ENCODE measurements at regions of chr10 and their contacts with region 1.

Region 1: GRCh38 chr10:24952707-24953645 is 570 bp upstream of the PRTFDC1 start:
- DNase-seq: peak; percentile 43 to 66 (median 49)
- H3K4me3 ChIP-seq: peak overlapping the region in 1 of 2 donors; percentile 59
- H3K4me3 Mint-ChIP-seq: peak overlapping the region; percentile 78 to 88 (median 84)
- H3K27ac ChIP-seq: peak overlapping the region; percentile 34
- H3K27ac Mint-ChIP-seq: peak overlapping the region; percentile 25 to 85 (median 66)
- H3K4me1 ChIP-seq: peaks cover 13% of the 10 kb centered on the region
- H3K4me1 Mint-ChIP-seq: peaks cover 13 to 37% (median 20%) of the 10 kb centered on the region in 4 donors
- H3K27me3 ChIP-seq: no peaks in the 10 kb centered on the region
- H3K27me3 Mint-ChIP-seq: no peaks in the 10 kb centered on the region

Region 2: DNA sequence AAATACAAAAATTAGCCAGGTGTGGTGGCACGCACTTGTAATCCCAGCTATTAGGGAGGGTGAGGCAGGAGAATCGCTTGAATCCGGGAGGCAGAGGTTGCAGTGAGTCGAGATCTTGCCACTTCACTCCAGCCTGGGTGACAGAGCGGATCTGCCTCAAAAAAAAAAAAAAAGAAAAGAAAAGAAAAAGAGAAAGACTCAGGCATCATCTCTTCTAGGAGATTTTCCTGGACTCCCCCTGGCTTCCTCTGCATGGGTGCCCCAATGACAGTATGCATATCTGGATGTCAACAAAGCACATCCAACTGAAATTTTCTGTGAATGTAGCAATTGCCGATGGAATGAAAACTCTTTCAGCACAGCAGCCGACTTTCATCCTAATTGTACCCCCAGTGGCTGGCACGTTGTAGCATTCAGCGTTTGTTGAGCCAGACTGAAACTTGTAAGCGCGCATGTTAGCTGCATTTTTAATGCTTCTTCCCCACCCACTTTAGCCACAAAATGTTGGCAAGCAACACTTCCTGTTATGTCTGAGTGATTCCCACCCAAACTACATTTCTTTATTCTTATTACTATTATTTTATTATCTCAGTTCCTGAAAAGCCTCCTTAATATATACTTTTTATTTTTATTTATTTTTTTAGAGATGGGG is 70.8 kb before region 1 on chr10:
- CTCF ChIA-PET with region 1: interaction called, 4 read pairs
- POLR2A ChIA-PET with region 1: interaction called, 13 read pairs
- intact Hi-C with region 1: loop called (anchors 2 kb)
- DNase-seq: peak; percentile 47 to 60 (median 52)
- H3K4me3 ChIP-seq: peak overlapping the region in 1 of 2 donors; percentile 39
- H3K4me3 Mint-ChIP-seq: peak overlapping the region; percentile 74 to 89 (median 86)
- H3K27ac ChIP-seq: peak overlapping the region; percentile 25
- H3K27ac Mint-ChIP-seq: peak overlapping the region; percentile 82 to 97 (median 91)
- H3K4me1 ChIP-seq: peaks cover 65% of the 10 kb centered on the region
- H3K4me1 Mint-ChIP-seq: peaks cover 28 to 67% (median 41%) of the 10 kb centered on the region in 4 donors
- H3K27me3 ChIP-seq: no peaks in the 10 kb centered on the region
- H3K27me3 Mint-ChIP-seq: no peaks in the 10 kb centered on the region

Region 3: DNA sequence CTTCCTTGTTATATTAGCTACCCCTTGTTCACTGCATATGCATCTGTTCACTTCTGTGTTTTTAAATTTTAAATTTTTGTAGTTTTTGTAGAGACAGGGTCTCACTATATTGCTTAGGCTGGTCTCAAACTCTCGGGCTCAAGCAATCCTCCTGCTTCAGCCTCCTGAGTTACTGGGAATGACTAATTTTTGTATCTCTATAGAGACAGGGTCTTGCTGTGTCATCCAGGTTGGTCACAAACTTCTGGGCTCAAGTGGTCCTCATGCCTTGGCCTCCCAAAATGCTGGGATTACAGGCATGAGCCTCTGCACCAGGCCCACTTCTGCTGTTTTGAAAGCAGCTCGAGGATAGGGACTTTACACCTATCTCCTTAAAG is 65.1 kb before region 1 on chr10:
- CTCF ChIA-PET with region 1: interaction called, 3 read pairs
- POLR2A ChIA-PET with region 1: interaction called, 13 read pairs
- intact Hi-C with region 1: loop called (anchors 2 kb)
- DNase-seq: no peak
- H3K4me3 ChIP-seq: peak overlapping the region in 1 of 2 donors; percentile 44
- H3K4me3 Mint-ChIP-seq: peak overlapping the region in 7 of 8 donors; percentile 45 to 84 (median 72)
- H3K27ac ChIP-seq: peak overlapping the region; percentile 49
- H3K27ac Mint-ChIP-seq: peak overlapping the region; percentile 63 to 98 (median 90)
- H3K4me1 ChIP-seq: peaks cover 73% of the 10 kb centered on the region
- H3K4me1 Mint-ChIP-seq: peaks cover 38 to 79% (median 62%) of the 10 kb centered on the region in 4 donors
- H3K27me3 ChIP-seq: no peaks in the 10 kb centered on the region
- H3K27me3 Mint-ChIP-seq: no peaks in the 10 kb centered on the region

Region 4: DNA sequence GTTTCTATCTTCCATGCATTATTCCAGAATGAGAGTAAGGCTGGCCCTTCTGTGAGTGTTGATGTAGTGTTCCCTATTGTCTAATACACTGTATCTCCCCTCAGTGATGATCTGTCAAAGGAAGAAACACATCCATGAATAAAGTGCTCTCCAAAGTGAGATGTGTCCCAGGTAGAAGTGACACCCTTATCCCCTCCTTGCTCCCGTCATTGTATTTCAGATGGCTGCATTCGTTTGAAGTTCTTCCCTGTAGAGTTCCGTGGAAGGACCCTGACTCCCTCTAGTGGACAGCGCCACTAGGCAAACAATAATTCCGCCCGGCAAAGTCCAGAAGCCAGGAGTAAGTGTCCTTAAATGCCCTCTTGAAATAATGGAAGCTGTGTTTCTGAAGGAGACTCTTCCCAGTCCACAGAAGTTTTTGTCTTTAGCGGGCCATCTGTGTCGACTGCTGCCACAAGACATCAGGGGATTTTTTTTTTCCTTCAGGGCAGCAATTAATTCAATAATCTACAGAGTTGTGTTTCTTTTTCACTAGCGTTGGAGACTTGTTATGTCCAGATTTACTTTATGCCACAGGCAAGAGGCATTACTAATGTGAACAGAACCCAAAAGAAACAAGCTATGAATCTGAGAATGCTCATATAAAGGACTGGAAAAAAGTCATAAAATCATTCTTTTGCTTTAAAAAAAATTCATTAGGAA is 128.1 kb after region 1 on chr10:
- CTCF ChIA-PET with region 1: interaction called, 7 read pairs
- POLR2A ChIA-PET with region 1: no interaction called
- intact Hi-C with region 1: loop called (anchors 1 kb)
- DNase-seq: peak in 4 of 5 donors; percentile 40 to 58 (median 48)
- H3K4me3 ChIP-seq: no peak overlapping the region
- H3K4me3 Mint-ChIP-seq: no peak overlapping the region
- H3K27ac ChIP-seq: no peak overlapping the region
- H3K27ac Mint-ChIP-seq: peak overlapping the region in 3 of 7 donors; percentile 1 to 54 (median 30)
- H3K4me1 ChIP-seq: no peaks in the 10 kb centered on the region
- H3K4me1 Mint-ChIP-seq: peaks cover 0 to 10% (median 4%) of the 10 kb centered on the region in 4 donors
- H3K27me3 ChIP-seq: no peaks in the 10 kb centered on the region
- H3K27me3 Mint-ChIP-seq: peaks cover 2 to 10% of the 10 kb centered on the region in 2 donors

Measured in CD4-positive, alpha-beta memory T cell (primary cell).